Activated CD8-positive, alpha-beta T cell treated with anti-CD3 and anti-CD28 coated beads for 36 hours (primary cell): ENCODE measurements at regions of chr1 and their contacts with region 1.

Region 1: DNA sequence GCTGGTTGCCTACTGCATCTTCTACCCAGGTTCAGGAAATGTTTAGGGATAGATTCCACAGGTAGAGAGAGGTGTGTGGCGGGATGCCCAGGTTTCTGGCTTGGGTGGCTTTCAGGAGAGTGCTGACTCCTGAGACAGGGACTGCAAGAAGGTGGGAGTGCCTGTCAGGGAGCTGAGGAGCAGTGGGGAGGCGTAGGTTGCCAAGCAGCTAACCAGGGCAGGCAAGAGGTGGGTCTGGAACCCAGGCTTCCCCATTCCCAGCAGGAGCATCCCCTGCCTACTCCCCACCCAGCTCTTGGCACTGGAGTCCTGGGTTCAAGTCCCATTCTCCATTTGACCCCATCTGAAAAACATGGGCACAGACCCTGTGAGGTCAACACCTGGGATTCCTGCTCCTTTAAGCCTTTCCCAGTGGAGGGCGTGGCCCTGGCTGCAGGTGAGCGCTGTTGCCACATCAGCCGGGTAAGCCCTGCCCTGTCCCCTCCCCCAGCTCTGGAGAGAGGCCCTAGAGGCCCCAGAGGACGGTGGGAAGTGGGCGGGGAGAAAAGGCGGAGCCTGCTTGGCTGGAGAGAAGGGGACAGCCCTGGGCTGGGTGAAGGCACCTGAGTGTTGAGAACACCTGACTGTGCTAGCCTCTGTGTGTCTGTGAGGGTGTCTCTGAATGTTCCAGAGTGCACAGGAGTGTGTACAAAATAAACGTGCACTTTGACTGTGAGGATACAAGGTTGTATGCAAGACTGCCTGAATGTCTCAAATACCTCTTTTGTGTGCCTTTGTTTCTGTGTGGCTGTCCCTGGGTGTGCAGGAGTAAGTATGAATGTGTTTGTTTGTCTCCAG is 14.0 kb upstream of the SYNC start:
- DNase-seq: peak; percentile 84
- ATAC-seq: peak; percentile 88
- H3K4me3 Mint-ChIP-seq: no peak overlapping the region
- H3K27ac Mint-ChIP-seq: no peak overlapping the region
- H3K4me1 Mint-ChIP-seq: peaks cover 4% of the 10 kb centered on the region
- H3K27me3 Mint-ChIP-seq: peaks cover 4% of the 10 kb centered on the region
- CTCF ChIP-seq: no peak

Region 2: DNA sequence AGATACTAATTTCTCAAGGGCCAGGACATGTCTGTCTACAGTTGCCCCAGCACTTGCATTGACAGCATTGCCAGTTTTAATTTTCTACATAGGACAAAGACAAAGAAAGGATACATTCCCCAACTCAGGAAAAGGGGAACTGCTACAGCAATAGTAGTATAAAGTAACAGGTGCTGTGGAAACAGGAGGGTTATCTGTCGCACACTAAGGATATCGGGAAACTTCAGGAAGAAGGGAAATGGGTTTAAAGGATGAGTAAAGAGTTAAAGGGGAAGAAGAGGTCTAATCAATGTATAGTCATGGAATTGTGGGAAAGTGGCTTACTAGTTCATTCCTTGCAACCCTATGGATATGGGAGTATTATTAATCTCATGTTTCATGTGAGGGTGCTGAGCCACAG is 30.1 kb before region 1 on chr1:
- CTCF ChIA-PET with region 1: interaction called, 30 read pairs
- POLR2A ChIA-PET with region 1: no interaction called
- intact Hi-C with region 1: no loop called
- DNase-seq: no peak
- ATAC-seq: no peak
- H3K4me3 Mint-ChIP-seq: no peak overlapping the region
- H3K27ac Mint-ChIP-seq: no peak overlapping the region
- H3K4me1 Mint-ChIP-seq: peaks cover 9% of the 10 kb centered on the region
- H3K27me3 Mint-ChIP-seq: no peaks in the 10 kb centered on the region
- CTCF ChIP-seq: no peak

Region 3: DNA sequence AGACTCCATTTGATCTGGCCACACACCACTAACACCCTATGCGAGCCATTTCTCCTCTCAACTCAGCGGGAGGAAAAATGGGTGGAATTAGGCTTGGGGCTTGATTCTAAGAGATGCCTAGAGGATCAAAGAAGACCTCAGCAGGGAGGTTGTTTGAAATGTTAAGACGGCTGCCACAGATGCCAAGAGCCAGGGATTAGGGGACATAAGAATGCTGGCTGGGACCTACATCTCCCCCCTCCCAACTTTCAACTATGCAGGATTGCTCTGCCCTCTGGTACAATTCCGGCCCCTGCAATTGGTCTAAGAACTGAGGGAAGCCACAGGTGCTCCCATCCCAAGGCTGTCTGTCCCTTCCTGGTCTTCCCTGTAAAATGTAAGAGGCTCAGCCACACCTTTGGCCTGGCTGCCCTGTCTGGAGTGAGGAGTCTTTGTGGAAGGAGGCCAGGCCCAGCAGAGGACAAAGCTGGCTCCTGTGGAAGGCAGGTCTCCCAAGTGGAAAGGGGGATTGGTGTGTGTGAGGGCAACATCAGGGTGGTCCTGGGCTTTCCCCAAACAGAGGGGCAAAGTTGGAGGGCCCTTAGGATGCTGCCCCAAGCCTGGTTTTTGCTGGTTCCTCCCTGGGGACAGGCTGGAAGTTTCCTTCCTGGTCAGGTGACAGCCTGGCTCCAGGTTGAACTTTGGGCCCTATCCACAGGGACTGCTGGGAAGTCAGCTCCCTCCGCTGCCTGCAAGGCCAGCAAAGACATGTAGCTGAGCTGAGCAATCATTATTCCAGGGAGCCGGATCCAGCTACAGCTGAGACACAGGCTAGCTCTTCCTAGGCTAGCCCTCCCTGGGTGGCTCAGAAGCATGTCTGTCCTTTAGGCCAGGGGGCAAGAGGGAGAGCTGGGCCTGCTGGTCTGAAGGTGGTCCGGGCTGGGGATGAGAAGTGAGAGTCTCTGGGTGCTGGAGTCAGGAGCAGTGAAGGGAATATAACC is 20.6 kb after region 1 on chr1:
- CTCF ChIA-PET with region 1: interaction called, 13 read pairs
- POLR2A ChIA-PET with region 1: no interaction called
- intact Hi-C with region 1: no loop called
- DNase-seq: no peak
- ATAC-seq: no peak
- H3K4me3 Mint-ChIP-seq: no peak overlapping the region
- H3K27ac Mint-ChIP-seq: no peak overlapping the region
- H3K4me1 Mint-ChIP-seq: no peaks in the 10 kb centered on the region
- H3K27me3 Mint-ChIP-seq: peaks cover 7% of the 10 kb centered on the region
- CTCF ChIP-seq: no peak

Region 4: GRCh38 chr1:32761253-32761880 is 44.8 kb after region 1 on chr1:
- CTCF ChIA-PET with region 1: interaction called, 21 read pairs
- POLR2A ChIA-PET with region 1: no interaction called
- intact Hi-C with region 1: loop called (anchors 5 kb)
- DNase-seq: peak; percentile 81
- ATAC-seq: peak; percentile 81
- H3K4me3 Mint-ChIP-seq: no peak overlapping the region
- H3K27ac Mint-ChIP-seq: peak overlapping the region; percentile 63
- H3K4me1 Mint-ChIP-seq: peaks cover 26% of the 10 kb centered on the region
- H3K27me3 Mint-ChIP-seq: no peaks in the 10 kb centered on the region
- CTCF ChIP-seq: no peak

Region 5: DNA sequence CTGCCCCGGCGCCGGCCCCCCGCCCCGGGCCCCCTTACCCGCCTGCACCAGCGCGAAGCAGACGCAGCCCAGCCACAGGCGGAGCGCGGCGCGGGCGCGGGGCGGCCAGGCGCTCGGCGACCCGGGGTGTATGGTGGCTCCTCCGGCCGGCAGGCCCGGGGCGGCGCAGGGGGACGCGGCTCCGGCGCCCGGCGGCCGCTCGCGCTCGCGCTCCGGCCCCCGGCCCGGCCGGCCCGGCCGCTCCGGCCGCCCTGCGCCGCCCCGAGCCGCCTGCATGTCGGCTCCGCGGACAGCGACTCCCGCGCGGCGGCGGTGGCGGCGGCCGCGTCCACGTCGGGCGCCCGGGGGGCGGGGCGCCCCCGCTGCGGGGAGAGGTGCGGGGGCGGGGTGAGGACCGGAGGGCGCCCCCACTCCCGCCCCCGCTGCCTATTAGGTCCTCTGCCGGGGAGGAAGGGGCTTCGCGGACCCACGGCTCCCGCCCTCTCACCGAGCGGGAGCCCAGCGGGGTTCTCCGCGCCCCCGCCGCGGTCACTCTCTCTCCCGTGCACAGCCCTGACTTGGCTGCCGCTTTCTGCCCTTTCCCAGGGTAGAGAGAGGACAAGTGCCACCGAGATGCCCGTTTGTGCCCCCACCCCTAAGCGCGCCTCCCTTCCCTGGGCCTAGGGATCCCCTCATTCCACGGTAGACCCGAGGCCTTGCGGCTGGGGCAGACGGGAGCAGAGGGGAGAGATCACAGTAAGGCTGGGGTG is 154.3 kb after region 1 on chr1 and contains the start of gene FNDC5:
- CTCF ChIA-PET with region 1: interaction called, 47 read pairs
- POLR2A ChIA-PET with region 1: no interaction called
- intact Hi-C with region 1: loop called (anchors 5 kb)
- DNase-seq: no peak
- ATAC-seq: peak; percentile 4
- H3K4me3 Mint-ChIP-seq: peak within 1 kb of the TSS; percentile 28
- H3K27ac Mint-ChIP-seq: no peak within 1 kb of the TSS
- H3K4me1 Mint-ChIP-seq: peaks cover 8% of the 10 kb centered on the region
- H3K27me3 Mint-ChIP-seq: peaks cover 41% of the 10 kb centered on the region
- CTCF ChIP-seq: no peak
- total RNA-seq, gene FNDC5: not detected